HEK293T (cell line): ENCODE measurements at regions of chr20 and their contacts with region 1.

Region 1: DNA sequence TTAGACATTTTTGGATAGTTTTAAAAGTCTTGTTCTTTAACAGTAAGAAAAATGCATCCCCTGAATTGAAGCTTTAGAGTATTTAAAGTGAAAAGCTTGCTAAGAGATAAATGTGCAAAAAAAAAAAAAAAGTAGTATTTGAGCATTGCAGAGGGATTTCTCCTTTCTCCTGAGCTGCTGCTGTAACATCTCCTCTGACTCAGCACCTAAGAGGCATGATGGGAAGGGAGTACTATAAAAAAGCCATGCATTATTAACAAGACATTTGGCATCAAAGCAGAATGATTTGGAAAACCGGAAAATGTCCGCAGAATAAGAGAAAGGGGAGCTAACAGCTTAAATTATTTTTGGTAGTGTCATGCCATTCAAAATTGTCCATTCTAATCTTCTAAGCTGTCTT is 27.9 kb downstream of the B4GALT5 start:
- DNase-seq: no peak

Region 2: GRCh38 chr20:49713753-49714712 is 28.2 kb after region 1 on chr20 and contains the start of gene B4GALT5:
- CTCF ChIA-PET with region 1: interaction called, 11 read pairs
- POLR2A ChIA-PET with region 1: no interaction called
- DNase-seq: peak; percentile 90